Posterior cingulate gyrus (tissue), 11 donors: ENCODE measurements at regions of chr4 and their contacts with region 1.

Region 1: DNA sequence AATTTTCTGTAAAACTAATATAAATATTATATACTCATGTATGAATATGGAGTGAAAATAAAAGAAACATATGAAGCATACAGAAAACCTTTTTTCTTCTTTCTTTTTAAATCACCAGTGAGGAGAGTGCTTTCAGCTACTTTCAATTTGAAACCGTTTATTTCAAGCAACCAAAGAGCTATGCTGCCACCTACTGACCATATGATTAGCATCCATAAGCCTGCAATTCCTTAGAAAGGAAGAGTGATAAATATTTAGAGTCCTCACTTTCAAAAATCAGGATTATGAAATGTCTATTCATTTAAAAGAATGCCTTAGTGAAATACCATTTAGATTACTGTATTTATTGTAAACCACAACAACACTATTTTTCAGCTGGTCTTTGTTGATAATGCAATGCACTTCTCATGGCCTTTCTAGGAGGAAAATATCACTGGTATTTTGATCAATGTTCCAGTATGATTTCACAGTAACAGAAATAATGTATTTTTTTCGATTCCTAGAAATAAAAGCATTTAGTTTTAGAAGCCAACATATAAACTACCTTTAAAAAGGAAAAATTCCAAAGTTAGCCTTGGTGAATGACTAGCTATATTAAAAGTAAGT is 667.6 kb downstream of the PCDH18 start:
- DNase-seq: peak in 2 of 10 donors; percentile 4 to 38

Region 2: DNA sequence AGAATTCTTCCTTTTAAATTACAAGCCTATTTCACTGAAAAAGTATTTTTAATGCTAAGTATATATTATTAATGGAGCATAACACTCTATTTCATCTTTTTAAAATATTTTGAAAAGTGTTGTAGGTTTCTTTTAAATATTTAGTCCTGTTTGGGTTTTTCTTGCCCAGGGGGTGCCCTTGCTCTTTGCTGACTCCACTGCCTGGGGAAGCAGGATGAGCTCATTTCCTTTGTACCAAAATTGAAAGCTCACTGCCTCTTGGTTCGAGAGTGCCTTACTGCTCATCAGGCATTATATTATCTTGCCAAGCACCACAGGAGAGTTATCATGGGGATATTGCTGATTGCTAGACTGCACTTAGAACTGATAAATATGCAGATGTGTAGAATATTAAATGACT is 151.5 kb before region 1 on chr4:
- intact Hi-C with region 1: loop called (anchors 2 kb)
- DNase-seq: peak in 3 of 10 donors; percentile 9 to 36 (median 22)